Common myeloid progenitor, CD34-positive (primary cell): ENCODE measurements at regions of chr9 and their contacts with region 1.

Region 1: GRCh38 chr9:33287087-33287490 is 3.2 kb upstream of the NFX1 start:
- DNase-seq: peak; percentile 73 to 90 (median 87)
- H3K4me3 ChIP-seq: no peak overlapping the region
- H3K27ac ChIP-seq: no peak overlapping the region
- H3K4me1 ChIP-seq: peaks cover 6 to 55% (median 40%) of the 10 kb centered on the region in 4 experiments
- H3K27me3 ChIP-seq: no peaks in the 10 kb centered on the region

Region 2: GRCh38 chr9:33297432-33297831 is 10.3 kb after region 1 on chr9:
- CTCF ChIA-PET with region 1: interaction called, 39 read pairs
- POLR2A ChIA-PET with region 1: interaction called, 5 read pairs
- DNase-seq: peak; percentile 85 to 97 (median 97)
- H3K4me3 ChIP-seq: peak overlapping the region in 2 of 7 experiments; percentile 25 to 40
- H3K27ac ChIP-seq: peak overlapping the region; percentile 18 to 78
- H3K4me1 ChIP-seq: peaks cover 29 to 46% (median 41%) of the 10 kb centered on the region in 4 experiments
- H3K27me3 ChIP-seq: no peaks in the 10 kb centered on the region

Region 3: GRCh38 chr9:33306037-33306436 is 18.9 kb after region 1 on chr9:
- CTCF ChIA-PET with region 1: interaction called, 23 read pairs
- POLR2A ChIA-PET with region 1: interaction called, 5 read pairs
- DNase-seq: no peak
- H3K4me3 ChIP-seq: no peak overlapping the region
- H3K27ac ChIP-seq: no peak overlapping the region
- H3K4me1 ChIP-seq: peaks cover 0 to 9% (median 5%) of the 10 kb centered on the region in 4 experiments
- H3K27me3 ChIP-seq: no peaks in the 10 kb centered on the region

Region 4: GRCh38 chr9:33315371-33315770 is 28.3 kb after region 1 on chr9:
- CTCF ChIA-PET with region 1: interaction called, 29 read pairs
- POLR2A ChIA-PET with region 1: interaction called, 3 read pairs
- DNase-seq: no peak
- H3K4me3 ChIP-seq: no peak overlapping the region
- H3K27ac ChIP-seq: no peak overlapping the region
- H3K4me1 ChIP-seq: no peaks in the 10 kb centered on the region
- H3K27me3 ChIP-seq: no peaks in the 10 kb centered on the region

Region 5: DNA sequence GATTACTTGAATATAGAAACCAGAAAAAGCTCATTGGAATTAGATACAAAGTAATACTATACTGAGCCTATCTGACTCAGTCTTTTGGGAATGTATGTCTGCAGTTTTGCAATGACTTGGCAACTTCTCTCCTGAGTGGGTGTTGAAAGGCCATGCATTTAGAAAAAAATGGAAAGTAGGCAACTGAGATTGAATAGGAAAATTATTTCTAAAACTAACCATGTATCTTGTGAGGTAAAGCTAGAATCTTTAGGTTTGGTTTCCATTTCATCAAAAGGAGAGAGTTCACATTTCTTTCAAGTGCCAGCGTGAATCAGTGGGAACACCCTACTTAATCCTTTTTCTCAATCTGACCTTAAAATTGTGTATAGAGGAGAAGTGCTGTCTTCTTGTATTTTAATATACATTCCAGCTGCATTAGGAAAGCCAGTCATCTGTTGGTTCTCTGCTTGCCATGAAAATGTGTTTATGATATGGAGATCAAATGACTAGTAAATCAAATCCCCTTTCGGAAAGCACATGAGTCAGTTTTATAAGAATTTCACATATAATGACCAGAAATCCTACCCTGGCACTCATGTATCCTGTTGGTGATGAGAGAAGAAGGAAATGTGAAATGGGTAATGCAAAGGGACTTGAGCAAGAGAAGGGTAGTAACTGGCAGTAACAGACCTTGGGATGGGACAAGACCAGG is 33.6 kb after region 1 on chr9:
- CTCF ChIA-PET with region 1: interaction called, 29 read pairs
- POLR2A ChIA-PET with region 1: interaction called, 4 read pairs
- DNase-seq: no peak
- H3K4me3 ChIP-seq: no peak overlapping the region
- H3K27ac ChIP-seq: no peak overlapping the region
- H3K4me1 ChIP-seq: no peaks in the 10 kb centered on the region
- H3K27me3 ChIP-seq: no peaks in the 10 kb centered on the region